ENCODE measurements at regions of chr1 and their contacts with region 1.

Region 1: DNA sequence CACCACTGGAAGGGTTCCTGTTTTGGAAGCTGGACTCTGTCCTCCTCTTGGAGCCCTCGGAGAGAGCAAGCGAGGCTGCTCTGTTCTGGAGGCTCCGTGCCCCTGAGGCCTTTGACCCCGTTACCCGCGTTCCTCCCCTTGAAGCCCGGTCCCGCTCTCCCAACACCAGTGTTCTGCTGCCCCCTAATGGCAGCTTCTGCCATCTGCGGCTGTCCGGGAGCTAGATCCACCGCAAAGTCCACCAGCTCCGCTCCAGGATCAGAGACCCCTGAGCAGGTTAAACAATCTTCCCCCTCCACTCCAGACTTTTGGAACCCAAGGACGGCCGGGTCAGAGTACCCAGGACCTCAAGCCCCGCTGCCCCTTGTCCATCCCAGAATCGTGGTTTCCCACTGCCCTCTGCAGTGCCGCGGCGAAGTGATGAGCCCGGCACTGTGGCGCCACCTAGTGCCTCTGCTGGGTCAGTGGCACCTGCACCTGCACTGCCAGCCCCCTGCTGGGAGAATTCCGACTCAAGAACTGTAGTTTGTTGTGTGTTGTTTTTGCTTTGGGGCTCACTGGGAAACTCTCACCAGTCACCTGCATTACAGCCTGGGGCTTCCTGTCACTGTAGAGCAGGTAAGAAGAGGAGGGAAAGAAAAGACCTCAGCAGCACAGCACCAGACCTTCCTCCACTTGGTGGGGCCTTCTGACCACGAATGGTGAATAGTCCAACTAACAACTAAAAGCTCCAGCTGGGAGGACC is 63.5 kb upstream of the NFASC start:
- DNase-seq: peak; percentile 90
- CTCF ChIP-seq: peak; percentile 99

Region 2: GRCh38 chr1:204431310-204432165 is 375.6 kb before region 1 on chr1:
- CTCF ChIA-PET with region 1: interaction called, 27 read pairs
- POLR2A ChIA-PET with region 1: no interaction called
- DNase-seq: peak; percentile 82
- CTCF ChIP-seq: peak; percentile 91

Region 3: GRCh38 chr1:204494281-204495077 is 312.6 kb before region 1 on chr1 and contains the start of gene PIK3C2B:
- CTCF ChIA-PET with region 1: interaction called, 12 read pairs
- POLR2A ChIA-PET with region 1: no interaction called
- DNase-seq: peak; percentile 90
- CTCF ChIP-seq: peak; percentile 47

Region 4: GRCh38 chr1:204560590-204561150 is 246.4 kb before region 1 on chr1:
- CTCF ChIA-PET with region 1: interaction called, 141 read pairs
- POLR2A ChIA-PET with region 1: no interaction called
- DNase-seq: no peak
- CTCF ChIP-seq: no peak

Region 5: GRCh38 chr1:204692841-204693356 is 114.2 kb before region 1 on chr1:
- CTCF ChIA-PET with region 1: interaction called, 11 read pairs
- POLR2A ChIA-PET with region 1: no interaction called
- DNase-seq: no peak
- CTCF ChIP-seq: no peak

Region 6: DNA sequence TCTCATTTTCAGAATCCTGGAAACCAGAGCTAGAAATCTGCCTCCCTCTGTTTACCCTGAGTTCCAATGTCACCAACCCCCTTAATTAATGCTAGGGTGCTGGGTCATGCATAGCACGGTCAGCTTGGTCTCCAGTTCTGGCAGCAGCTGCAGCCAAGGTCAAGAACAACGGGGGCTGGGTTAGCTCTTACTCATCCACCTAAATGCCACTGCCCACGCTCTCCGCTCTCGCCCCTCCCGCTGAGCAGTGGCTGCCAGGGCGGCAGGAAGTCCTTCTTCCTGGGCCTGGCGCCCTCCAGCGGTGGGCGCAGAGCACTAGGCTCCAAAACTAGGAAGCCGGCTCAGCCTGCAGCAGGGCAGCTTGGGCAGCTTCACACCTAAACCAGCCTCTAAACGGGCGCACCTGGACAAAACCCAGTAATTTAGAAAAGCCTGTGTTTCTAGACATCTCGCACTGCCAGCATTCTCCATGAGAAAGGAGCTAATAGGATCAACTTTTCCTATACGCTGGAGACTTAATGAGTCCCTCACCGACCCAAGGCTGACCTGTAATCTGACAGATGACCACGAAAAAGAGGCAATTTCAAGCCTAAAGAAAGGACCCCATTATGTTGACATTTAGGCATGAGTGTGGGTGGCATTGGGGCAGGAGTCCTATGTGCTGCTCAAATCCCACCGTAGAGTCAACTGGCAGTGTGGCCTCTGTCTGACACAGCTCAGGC is 43.2 kb before region 1 on chr1:
- CTCF ChIA-PET with region 1: interaction called, 16 read pairs
- POLR2A ChIA-PET with region 1: no interaction called
- DNase-seq: peak; percentile 82
- CTCF ChIP-seq: peak; percentile 86

Region 7: GRCh38 chr1:204828338-204828850 is 21.3 kb after region 1 on chr1:
- CTCF ChIA-PET with region 1: interaction called, 225 read pairs
- POLR2A ChIA-PET with region 1: no interaction called
- DNase-seq: no peak
- CTCF ChIP-seq: no peak

Region 8: DNA sequence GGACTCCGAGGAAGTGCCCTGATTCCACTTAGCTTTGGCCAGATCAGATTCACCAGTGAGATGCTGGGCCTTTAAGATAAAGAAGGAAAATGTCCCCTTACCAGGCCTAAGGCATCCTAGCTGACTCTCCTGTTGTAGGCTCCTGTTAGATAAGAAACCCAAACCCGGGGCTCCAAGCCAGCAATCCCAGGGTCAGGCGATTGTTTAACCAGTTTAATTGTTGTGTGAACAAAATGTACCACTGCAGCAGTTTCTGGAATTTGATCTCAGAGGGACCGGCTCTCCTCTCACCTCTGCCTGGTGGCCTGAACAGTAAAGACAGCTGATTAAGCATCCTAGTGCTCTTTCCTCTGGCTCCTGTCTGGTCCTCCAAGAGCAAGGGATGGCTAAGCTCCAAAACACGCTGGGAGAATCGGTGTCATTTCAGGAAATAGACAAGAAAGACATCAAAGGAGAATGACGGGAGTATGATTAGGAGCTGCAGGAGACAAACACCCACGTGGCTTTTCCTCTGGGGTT is 558.9 kb after region 1 on chr1:
- CTCF ChIA-PET with region 1: no interaction called
- POLR2A ChIA-PET with region 1: no interaction called
- DNase-seq: no peak
- CTCF ChIP-seq: no peak